ENCODE measurements at regions of chr12 and their contacts with region 1.

Region 1: DNA sequence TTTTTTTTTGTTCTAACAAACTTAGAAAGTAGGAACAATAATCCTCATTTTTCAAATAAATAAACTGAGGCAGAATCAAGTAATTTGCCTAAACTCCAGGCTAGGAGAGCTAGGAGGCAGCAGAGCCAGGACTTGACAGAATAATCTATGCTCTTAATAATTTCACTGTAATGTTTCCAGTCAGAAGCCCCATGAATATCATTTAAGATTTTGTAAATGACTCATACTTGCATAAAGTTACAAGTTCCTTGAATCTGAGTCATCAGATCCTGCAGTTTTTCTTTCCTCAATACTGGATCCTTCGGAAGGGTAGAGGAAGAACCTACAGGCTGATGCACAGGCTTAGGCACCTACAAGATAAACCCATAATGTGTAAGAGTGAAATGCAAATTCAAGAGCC is 29.0 kb downstream of the CAPRIN2 start:
- DNase-seq: no peak
- H3K4me3 ChIP-seq: no peak overlapping the region
- H3K27ac ChIP-seq: no peak overlapping the region
- H3K4me1 ChIP-seq: no peaks in the 10 kb centered on the region
- H3K27me3 ChIP-seq: no peaks in the 10 kb centered on the region
- CTCF ChIP-seq: no peak
- POLR2A ChIP-seq: no peak

Region 2: DNA sequence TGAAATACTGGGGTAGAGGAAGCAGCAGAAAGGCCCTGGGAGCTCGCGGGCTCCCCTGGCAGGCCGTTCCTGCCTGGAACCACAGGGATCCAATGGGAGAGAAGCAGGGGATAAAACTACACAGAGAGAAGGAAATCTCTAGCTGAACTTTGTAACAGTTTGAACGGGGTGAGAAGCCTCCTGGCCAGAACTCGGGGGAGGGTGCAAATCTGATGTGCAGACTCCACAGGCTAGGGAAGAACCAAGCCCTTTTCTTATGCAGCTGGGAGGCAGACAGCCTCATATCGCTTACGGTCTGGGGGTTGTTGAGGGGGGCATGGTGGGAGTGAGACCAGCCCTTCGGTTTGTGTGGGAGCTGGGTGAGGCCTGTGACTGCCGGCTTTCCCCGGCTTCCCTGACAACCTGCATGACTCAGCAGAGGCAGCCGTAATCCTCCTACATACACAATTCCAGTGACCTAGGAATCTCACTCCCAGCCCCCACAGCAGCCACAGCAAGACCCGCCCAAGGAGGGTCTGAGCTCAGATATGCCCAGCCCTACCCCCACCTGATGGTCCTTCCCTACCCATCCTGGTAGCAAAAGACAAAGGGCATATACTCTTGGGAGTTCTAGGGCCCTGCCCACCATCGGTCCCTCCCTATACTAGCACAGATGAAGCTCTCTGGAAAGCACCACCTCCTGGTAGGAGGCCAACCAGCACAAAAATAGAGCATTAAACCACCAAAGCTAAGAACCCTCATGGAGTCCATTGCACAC is 1085.0 kb before region 1 on chr12:
- intact Hi-C with region 1: no loop called
- DNase-seq: no peak
- H3K4me3 ChIP-seq: peak overlapping the region in 1 of 3 donors; percentile 31
- H3K27ac ChIP-seq: peak overlapping the region; percentile 13 to 66
- H3K4me1 ChIP-seq: no peaks in the 10 kb centered on the region
- H3K27me3 ChIP-seq: no peaks in the 10 kb centered on the region
- CTCF ChIP-seq: no peak
- POLR2A ChIP-seq: no peak

Region 3: DNA sequence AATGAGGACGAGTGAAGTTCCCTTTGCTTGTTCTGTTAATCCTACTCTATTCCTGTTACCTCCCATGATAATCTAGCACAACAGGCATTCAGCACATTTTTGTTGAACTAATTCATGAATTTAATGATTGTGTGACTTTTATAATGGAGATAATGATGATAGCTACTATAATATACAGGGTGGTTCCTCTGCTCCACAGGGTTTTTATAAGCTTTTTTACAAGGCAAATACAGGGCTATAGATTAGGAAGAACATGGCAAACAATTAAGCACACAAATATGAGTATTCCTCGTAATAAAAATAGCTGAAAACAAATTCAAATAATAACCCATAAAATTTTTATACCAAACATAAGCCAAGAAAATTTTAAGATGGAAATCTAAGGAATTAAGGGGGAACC is 796.4 kb before region 1 on chr12:
- intact Hi-C with region 1: loop called (anchors 5 kb)
- DNase-seq: no peak
- H3K4me3 ChIP-seq: no peak overlapping the region
- H3K27ac ChIP-seq: no peak overlapping the region
- H3K4me1 ChIP-seq: no peaks in the 10 kb centered on the region
- H3K27me3 ChIP-seq: no peaks in the 10 kb centered on the region
- CTCF ChIP-seq: no peak
- POLR2A ChIP-seq: no peak

Region 4: GRCh38 chr12:31456562-31456961 is 730.8 kb after region 1 on chr12:
- intact Hi-C with region 1: no loop called
- DNase-seq: no peak
- H3K4me3 ChIP-seq: no peak overlapping the region
- H3K27ac ChIP-seq: no peak overlapping the region
- H3K4me1 ChIP-seq: no peaks in the 10 kb centered on the region
- H3K27me3 ChIP-seq: no peaks in the 10 kb centered on the region
- CTCF ChIP-seq: no peak
- POLR2A ChIP-seq: no peak

Measured in breast epithelium (tissue), 4 donors.